ENCODE measurements at regions of chr13 and their contacts with region 1.

Region 1: GRCh38 chr13:30158774-30159445 is 148.4 kb downstream of the KATNAL1 start:
- DNase-seq: peak in 4 of 5 donors; percentile 58 to 61 (median 60)
- H3K4me3 ChIP-seq: no peak overlapping the region
- H3K4me3 Mint-ChIP-seq: peak overlapping the region in 7 of 8 donors; percentile 17 to 69 (median 59)
- H3K27ac ChIP-seq: no peak overlapping the region
- H3K27ac Mint-ChIP-seq: peak overlapping the region in 5 of 7 donors; percentile 7 to 89 (median 74)
- H3K4me1 ChIP-seq: peaks cover 39% of the 10 kb centered on the region
- H3K4me1 Mint-ChIP-seq: peaks cover 26 to 61% (median 41%) of the 10 kb centered on the region in 4 donors
- H3K27me3 ChIP-seq: no peaks in the 10 kb centered on the region
- H3K27me3 Mint-ChIP-seq: no peaks in the 10 kb centered on the region

Region 2: GRCh38 chr13:29771247-29771646 is 387.7 kb before region 1 on chr13:
- CTCF ChIA-PET with region 1: interaction called, 21 read pairs
- POLR2A ChIA-PET with region 1: no interaction called
- intact Hi-C with region 1: loop called (anchors 1 kb)
- DNase-seq: peak in 4 of 5 donors; percentile 49 to 54 (median 52)
- H3K4me3 ChIP-seq: no peak overlapping the region
- H3K4me3 Mint-ChIP-seq: no peak overlapping the region
- H3K27ac ChIP-seq: no peak overlapping the region
- H3K27ac Mint-ChIP-seq: no peak overlapping the region
- H3K4me1 ChIP-seq: no peaks in the 10 kb centered on the region
- H3K4me1 Mint-ChIP-seq: peaks cover 0 to 4% (median 3%) of the 10 kb centered on the region in 4 donors
- H3K27me3 ChIP-seq: no peaks in the 10 kb centered on the region
- H3K27me3 Mint-ChIP-seq: no peaks in the 10 kb centered on the region

Region 3: DNA sequence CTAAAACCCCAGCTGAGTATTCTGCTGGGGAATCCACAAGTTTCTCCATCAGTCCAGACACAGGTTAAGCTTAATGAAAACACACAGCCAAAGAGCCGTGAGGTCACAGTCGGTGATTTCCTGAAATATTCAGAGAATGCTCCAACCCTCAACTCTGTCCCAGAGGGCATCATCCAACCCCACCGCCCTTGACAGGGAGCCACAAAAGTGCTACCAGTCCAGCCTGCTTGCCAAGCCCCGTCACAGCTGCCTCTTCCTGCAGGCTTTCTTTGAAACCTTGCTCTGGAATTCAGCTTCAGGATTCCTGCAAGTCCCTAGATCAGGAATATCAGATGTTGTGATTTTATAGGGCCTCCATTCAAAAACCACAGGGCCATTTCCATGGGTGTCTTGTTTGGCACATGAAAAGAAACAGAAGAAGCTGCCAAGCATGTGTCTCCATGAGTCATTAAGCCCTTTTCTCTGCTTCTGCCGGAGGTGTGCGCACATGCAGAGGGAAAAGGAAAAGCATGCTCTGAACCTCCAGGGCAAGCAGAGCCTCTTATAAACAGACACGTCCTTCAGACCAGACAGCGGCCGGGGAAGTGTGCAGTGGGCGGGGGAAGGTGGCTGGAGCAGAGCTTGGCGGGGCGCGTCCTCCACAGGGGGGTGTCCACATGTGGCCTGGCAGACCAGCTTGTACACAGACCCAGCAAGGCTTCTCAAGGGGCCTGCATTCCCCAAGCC is 16.3 kb before region 1 on chr13:
- CTCF ChIA-PET with region 1: interaction called, 974 read pairs
- POLR2A ChIA-PET with region 1: interaction called, 440 read pairs
- intact Hi-C with region 1: no loop called
- DNase-seq: peak; percentile 13 to 64 (median 22)
- H3K4me3 ChIP-seq: no peak overlapping the region
- H3K4me3 Mint-ChIP-seq: peak overlapping the region in 7 of 8 donors; percentile 4 to 74 (median 53)
- H3K27ac ChIP-seq: peak overlapping the region; percentile 27
- H3K27ac Mint-ChIP-seq: peak overlapping the region; percentile 83 to 92 (median 88)
- H3K4me1 ChIP-seq: peaks cover 67% of the 10 kb centered on the region
- H3K4me1 Mint-ChIP-seq: peaks cover 49 to 86% (median 70%) of the 10 kb centered on the region in 4 donors
- H3K27me3 ChIP-seq: no peaks in the 10 kb centered on the region
- H3K27me3 Mint-ChIP-seq: no peaks in the 10 kb centered on the region

Region 4: DNA sequence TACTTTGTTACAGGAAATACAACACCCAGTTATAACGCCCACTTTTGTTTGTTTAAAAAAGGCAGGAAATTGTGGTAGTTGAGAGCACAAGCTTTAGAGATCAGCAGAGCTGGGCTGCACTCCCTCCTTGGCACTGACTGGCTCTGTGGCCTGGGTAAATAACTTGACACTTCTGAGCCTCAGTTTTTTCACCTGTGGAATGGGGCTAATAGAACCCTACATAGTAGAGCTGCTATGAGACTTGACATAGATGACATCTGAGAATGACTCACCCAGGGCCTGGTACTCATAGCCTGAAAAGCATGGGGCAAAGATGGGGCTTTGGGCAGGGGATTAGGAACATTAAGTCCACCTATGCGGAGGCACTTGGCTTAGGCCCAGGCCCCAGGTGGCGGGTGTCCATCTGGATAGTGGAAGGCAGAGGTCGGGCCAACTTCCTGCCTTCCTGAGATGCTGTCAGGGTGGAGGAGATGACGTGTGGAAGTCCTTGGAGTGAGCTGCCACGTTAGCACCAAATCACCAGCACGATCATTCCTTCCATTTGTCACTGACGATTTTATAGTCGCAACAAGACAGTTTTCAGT is 10.6 kb before region 1 on chr13:
- CTCF ChIA-PET with region 1: interaction called, 132 read pairs
- POLR2A ChIA-PET with region 1: interaction called, 440 read pairs
- intact Hi-C with region 1: loop called (anchors 1 kb)
- DNase-seq: peak; percentile 73 to 81 (median 80)
- H3K4me3 ChIP-seq: peak overlapping the region in 1 of 2 donors; percentile 31
- H3K4me3 Mint-ChIP-seq: peak overlapping the region in 7 of 8 donors; percentile 70 to 88 (median 75)
- H3K27ac ChIP-seq: peak overlapping the region; percentile 60
- H3K27ac Mint-ChIP-seq: peak overlapping the region; percentile 90 to 97 (median 93)
- H3K4me1 ChIP-seq: peaks cover 99% of the 10 kb centered on the region
- H3K4me1 Mint-ChIP-seq: peaks cover 79 to 100% (median 93%) of the 10 kb centered on the region in 4 donors
- H3K27me3 ChIP-seq: no peaks in the 10 kb centered on the region
- H3K27me3 Mint-ChIP-seq: no peaks in the 10 kb centered on the region

Region 5: DNA sequence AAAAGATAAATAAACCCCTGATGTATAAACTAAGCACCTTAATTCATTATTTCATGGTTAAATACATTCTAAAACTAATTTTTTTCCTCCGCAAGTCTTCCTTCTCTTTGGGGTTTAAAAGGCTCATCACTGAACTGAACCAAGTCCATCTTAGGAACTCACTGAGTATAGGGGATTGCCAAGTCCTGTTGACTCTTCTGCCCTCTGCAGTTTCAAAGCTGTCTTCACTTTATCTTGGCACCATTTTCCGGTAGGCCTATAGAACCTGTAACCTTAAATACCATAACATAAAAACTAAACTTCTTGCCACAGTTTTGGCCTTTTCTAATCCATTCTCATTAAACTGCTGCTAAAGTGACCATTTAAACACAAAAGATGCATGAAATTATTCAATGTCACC is 392.3 kb after region 1 on chr13:
- CTCF ChIA-PET with region 1: no interaction called
- POLR2A ChIA-PET with region 1: no interaction called
- intact Hi-C with region 1: loop called (anchors 2 kb)
- DNase-seq: peak in 4 of 5 donors; percentile 19 to 21 (median 20)
- H3K4me3 ChIP-seq: no peak overlapping the region
- H3K4me3 Mint-ChIP-seq: no peak overlapping the region
- H3K27ac ChIP-seq: no peak overlapping the region
- H3K27ac Mint-ChIP-seq: no peak overlapping the region
- H3K4me1 ChIP-seq: no peaks in the 10 kb centered on the region
- H3K4me1 Mint-ChIP-seq: peaks cover 0 to 3% (median under 1%) of the 10 kb centered on the region in 4 donors
- H3K27me3 ChIP-seq: no peaks in the 10 kb centered on the region
- H3K27me3 Mint-ChIP-seq: no peaks in the 10 kb centered on the region